ENCODE measurements at regions of chr15 and their contacts with region 1.

Region 1: DNA sequence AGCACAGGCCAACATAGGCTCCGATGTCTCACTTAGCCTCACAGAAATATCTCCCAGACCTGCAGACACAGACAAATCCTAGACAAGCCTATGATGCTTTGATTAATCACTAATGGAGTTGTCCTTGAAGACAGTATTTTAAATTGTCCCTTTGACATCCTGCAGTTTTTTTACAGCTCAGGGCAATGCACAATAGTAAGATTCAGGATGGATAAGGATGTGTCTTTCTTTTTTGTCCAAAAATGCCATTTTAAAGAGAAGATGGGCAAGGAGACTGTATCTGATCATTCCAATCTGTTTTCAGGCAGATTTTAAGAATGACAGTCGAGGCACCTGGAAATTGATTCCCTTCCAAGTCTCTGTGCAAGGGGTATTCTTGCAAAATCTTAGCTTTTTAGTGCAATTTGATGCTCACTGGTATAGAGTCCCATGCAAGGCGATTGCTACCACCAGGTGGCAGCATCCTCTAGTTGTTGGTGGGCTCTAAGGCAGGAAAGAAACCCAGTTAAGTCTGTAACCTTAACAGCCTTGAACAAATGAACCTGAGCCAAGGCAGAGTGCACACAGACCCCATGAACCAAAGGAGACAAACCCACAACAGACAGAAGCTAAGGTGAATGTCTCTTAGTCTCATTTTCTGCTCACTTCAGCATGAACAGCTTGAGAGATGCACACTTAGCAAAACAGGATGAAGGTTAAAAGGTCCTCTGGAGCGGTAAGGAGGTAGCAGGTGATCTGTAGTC is 51.2 kb upstream of the MINAR1 start:
- DNase-seq: peak; percentile 66 to 90
- ATAC-seq: peak; percentile 95

Region 2: GRCh38 chr15:79689030-79689429 is 308.1 kb after region 1 on chr15:
- intact Hi-C with region 1: no loop called
- DNase-seq: no peak
- ATAC-seq: no peak

Region 3: DNA sequence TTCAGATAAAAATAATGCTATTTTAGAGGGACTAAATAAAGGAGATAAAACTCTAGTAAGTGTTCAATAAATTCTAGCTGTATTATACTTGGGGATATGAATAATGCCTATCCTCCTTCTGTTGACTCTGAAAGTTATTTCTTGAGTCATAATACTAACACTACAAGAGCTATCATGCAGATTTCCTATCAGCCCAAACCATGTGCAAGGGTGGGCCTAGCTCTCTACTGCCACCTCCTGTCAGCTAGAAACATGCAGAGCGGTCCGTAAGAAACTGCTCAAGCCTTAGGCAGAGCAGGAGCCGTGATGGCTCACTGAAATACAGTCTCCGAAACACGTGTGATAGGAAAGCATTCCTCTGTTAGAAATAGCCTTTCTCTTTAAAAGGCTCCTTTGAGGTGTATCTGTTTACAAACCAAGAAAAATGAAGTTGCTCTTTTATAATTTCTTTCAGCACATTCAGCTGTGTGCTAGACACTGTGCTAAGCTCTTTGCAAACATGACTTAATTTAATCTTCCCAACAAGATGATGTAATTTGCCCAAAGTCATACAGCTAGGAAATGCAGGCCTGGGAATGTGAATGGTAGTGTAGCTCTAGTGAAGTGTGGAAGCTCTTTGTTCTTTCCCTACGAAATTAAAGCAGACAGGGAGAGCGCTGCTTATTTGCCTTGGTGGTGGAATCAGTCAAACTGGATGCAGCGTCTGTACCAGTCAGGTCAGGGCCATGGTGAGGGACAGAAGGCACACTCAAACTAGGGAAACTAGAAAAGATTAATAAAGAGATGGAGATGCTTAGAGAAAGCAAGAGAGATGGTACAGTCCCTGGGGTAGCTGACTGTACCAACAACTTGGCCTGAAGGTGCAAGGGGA is 472.8 kb after region 1 on chr15:
- intact Hi-C with region 1: loop called (anchors 5 to 10 kb)
- DNase-seq: peak; percentile 40 to 62
- ATAC-seq: peak; percentile 97

Region 4: DNA sequence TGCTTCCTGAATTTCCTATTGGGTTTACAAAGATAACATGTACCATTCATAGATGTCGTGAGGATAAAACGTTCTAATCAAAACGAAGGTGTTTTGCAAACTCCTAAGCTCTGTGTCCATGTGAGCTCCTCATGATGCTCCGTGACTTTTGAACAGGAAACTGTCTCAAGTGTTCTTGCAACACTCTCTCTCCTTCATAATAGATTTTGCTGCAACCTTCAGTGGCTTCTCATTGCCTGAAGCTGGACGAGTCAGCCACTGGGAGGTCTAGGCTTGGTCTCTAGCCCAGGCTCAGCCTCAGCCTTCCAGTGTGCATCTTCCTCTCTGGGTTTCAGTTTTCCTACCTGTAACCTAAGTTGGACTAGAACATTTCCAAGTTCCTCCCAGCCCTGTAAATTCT is 608.8 kb after region 1 on chr15:
- intact Hi-C with region 1: loop called in 1 of 2 experiments (anchors 5 kb)
- DNase-seq: no peak
- ATAC-seq: no peak

Measured in left colon (tissue), 2 donors.